Activated CD4-positive, alpha-beta T cell treated with anti-CD3 and anti-CD28 coated beads for 36 hours (primary cell): ENCODE measurements at regions of chr1 and their contacts with region 1.

Region 1: DNA sequence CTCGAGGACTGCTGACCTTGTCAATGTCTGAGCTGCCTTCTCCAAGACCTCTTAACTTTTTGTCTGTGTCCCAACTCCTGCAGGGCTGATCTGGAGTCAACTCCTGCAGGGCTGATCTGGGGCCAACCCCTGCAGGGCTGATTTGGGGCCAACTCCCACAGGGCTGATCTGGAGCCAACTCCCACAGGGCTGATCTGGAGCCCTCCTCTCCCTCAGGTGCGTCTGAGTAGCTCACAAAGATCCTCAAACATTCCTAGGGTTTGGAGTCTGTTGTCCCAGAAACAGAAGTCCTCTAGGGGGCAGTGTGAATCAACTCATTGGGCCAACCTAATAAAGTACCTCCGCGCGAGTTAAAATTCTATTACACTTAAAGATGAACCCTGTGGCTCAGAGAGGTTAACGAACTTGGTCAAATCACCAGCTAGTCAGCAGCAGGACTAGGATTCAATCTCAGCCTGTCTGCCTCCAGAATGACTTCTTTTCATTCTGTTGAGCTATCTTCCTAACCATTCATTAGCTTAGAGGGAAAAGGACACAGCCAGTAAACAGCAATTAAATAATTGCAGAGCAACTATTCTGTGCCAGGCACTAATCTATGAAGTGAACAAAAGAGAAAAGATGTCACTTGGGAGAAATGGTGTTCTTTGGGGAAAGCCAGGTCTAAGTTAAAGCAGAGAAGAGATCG is 17.2 kb upstream of the RLF start:
- DNase-seq: peak; percentile 67
- ATAC-seq: peak; percentile 86
- H3K4me3 Mint-ChIP-seq: no peak overlapping the region
- H3K27ac Mint-ChIP-seq: no peak overlapping the region
- H3K4me1 Mint-ChIP-seq: peaks cover 10% of the 10 kb centered on the region
- H3K27me3 Mint-ChIP-seq: peaks cover 22% of the 10 kb centered on the region

Region 2: DNA sequence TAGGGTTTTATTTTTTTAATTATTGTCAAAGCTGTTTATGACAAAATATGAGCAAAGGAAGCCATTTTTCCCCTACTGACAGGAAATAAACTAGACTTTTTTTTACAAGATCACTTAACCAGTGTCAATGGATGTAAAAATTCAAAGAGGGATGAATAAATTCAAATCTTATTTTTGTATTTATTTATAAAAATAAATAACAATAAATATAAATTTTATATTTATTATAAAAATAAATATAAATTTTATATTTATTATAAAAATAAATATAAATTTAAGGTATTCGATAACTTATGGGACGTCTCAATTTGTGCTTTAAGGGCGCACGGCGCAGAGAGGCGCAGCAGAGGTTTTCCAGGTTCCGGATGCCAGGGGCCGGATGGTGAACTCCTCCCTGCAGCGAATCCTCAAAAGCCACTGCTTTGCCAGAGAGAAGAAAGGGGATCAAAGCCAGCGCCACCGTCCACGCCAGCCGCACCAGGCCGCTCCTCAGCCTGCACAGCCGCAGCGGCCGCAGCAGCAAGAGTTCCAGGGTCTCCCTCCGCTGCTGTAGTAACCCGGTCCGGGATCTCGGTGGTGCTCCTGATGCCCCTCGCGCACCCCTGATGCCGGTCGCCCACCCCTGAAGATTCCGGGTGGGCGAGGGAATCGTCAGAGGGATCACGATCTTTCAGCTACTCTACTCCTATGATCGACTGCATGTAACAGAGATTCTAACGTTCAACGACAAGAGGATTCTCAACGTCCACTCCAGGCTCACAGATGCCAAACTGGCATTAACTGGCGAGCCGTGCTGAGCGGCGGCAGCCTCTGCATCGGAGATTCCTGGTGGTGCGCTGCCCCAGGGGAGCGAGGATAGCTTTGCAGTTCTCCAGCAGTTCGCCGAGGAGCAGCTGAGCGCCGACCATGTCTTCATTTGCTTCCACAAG is 11.4 kb before region 1 on chr1:
- CTCF ChIA-PET with region 1: interaction called, 14 read pairs
- POLR2A ChIA-PET with region 1: no interaction called
- intact Hi-C with region 1: no loop called
- DNase-seq: no peak
- ATAC-seq: no peak
- H3K4me3 Mint-ChIP-seq: no peak overlapping the region
- H3K27ac Mint-ChIP-seq: no peak overlapping the region
- H3K4me1 Mint-ChIP-seq: no peaks in the 10 kb centered on the region
- H3K27me3 Mint-ChIP-seq: peaks cover 6% of the 10 kb centered on the region

Region 3: DNA sequence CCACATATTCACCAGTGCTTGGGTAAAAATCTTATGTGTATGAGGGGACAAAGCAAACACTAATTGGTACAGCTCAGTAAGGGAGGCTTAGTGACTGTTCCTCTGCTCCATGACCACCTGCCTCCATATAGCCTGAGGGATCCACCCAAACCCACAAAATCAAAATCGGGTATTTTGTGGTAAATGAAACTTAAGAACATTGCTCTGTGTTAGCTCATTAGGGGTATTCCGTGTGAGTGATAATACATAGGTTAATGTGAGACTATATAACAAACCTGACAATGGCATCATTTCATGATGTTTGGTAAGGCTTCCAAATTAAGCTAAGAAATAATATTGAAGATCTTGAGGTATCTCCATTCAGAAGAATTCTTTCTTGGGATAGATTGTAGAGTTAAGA is 147.3 kb after region 1 on chr1:
- CTCF ChIA-PET with region 1: interaction called, 10 read pairs
- POLR2A ChIA-PET with region 1: no interaction called
- intact Hi-C with region 1: no loop called
- DNase-seq: no peak
- ATAC-seq: no peak
- H3K4me3 Mint-ChIP-seq: no peak overlapping the region
- H3K27ac Mint-ChIP-seq: peak overlapping the region; percentile 35
- H3K4me1 Mint-ChIP-seq: no peaks in the 10 kb centered on the region
- H3K27me3 Mint-ChIP-seq: no peaks in the 10 kb centered on the region

Region 4: GRCh38 chr1:40404670-40405462 is 260.8 kb after region 1 on chr1:
- CTCF ChIA-PET with region 1: interaction called, 21 read pairs
- POLR2A ChIA-PET with region 1: interaction called, 4 read pairs
- intact Hi-C with region 1: loop called in 1 of 2 experiments (anchors 2 kb)
- DNase-seq: peak; percentile 61
- ATAC-seq: peak; percentile 34
- H3K4me3 Mint-ChIP-seq: peak overlapping the region; percentile 3
- H3K27ac Mint-ChIP-seq: peak overlapping the region; percentile 91
- H3K4me1 Mint-ChIP-seq: peaks cover 64% of the 10 kb centered on the region
- H3K27me3 Mint-ChIP-seq: no peaks in the 10 kb centered on the region

Region 5: GRCh38 chr1:40531381-40532061 is 387.5 kb after region 1 on chr1 and contains the start of gene ZNF684:
- CTCF ChIA-PET with region 1: interaction called, 3 read pairs
- POLR2A ChIA-PET with region 1: no interaction called
- intact Hi-C with region 1: loop called in 1 of 2 experiments (anchors 2 kb)
- DNase-seq: peak; percentile 91
- ATAC-seq: peak; percentile 98
- H3K4me3 Mint-ChIP-seq: peak within 1 kb of the TSS; percentile 88
- H3K27ac Mint-ChIP-seq: peak within 1 kb of the TSS; percentile 83
- H3K4me1 Mint-ChIP-seq: peaks cover 17% of the 10 kb centered on the region
- H3K27me3 Mint-ChIP-seq: peaks cover 6% of the 10 kb centered on the region
- total RNA-seq, gene ZNF684: 4.5 to 6.6 TPM

Region 6: GRCh38 chr1:40849801-40850592 is 706.0 kb after region 1 on chr1:
- CTCF ChIA-PET with region 1: no interaction called
- POLR2A ChIA-PET with region 1: no interaction called
- intact Hi-C with region 1: loop called in 1 of 2 experiments (anchors 5 kb)
- DNase-seq: peak; percentile 88
- ATAC-seq: peak; percentile 90
- H3K4me3 Mint-ChIP-seq: no peak overlapping the region
- H3K27ac Mint-ChIP-seq: no peak overlapping the region
- H3K4me1 Mint-ChIP-seq: peaks cover 10% of the 10 kb centered on the region
- H3K27me3 Mint-ChIP-seq: no peaks in the 10 kb centered on the region